ENCODE measurements at regions of chr19 and their contacts with region 1.

Region 1: DNA sequence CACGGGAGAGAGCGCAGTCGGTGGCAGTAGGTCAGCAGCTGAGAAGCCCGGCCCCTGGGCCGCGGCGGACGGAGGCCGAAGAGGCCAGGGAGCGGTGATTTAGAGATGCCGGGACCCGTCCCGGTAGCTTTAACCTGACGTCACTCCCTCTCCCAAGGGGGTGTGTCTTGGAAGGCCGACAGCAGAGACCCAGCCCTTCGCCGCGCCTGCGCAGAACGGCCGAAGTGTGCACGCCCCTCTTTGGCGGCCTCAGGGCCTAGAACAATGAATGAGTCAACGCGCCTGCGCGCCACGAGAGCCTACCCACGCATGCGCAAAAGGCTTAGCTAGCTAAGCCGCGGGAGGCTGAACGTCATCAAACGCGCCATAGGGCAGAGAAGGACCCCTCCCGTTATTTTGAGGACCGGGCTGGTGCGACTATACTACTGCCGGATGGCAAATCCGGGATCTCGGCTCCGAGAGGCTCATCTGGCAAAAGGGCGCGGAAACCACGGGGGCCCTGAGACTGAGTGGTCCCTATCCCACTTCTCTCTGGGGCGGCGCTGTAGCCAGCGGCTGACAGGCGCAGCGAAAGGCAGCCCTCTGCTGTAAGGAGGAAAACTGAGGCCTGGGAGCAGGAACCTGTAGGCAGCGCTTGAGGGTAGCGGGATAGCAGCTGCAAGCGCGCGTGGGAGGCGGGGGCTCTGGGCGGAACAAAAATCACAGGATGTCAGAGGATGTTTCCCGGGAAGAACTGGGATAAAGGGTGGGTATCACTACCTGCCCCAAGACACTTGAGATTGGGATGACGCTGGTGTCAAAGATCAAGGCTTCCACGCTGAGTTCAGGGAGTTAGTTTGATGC is at the starts of genes IRGQ and ZNF576:
- DNase-seq: peak; percentile 100
- total RNA-seq, gene IRGQ: 19.2 to 21.0 TPM
- total RNA-seq, gene ZNF576: 8.9 to 13.2 TPM

Region 2: DNA sequence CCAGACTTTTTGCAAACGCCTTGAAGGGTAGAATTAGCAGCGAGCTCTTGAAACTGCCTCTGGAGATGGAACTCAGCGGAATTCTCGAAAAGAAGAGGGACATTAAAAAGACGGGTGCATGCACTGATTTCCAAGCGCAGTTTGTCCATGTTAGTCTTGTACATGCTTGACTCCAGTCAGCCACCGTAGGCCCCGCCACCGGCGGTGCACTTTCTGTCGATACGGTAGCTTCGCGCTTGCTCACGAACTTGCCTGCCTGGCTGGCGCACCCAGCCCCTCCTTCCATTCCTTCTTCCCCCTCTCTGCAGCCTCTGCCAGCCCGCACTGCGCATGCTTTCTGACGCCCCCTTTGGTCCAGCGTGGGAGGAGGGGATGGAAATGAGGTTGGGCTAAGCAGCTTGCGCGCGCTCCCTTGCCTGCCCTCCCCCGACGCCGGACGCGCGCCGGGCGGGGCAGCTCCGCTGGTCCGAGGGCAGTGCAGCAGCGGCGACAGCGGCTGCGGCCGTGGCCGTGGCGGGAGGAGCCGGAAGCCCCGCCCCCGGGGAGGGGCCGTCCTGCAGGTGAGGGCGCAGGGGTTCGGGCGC is 63.2 kb before region 1 on chr19 and contains the start of gene ZNF575:
- intact Hi-C with region 1: loop called in 1 of 2 experiments (anchors 10 kb)
- DNase-seq: peak; percentile 96
- total RNA-seq, gene ZNF575: 2.1 to 3.4 TPM